Activated B cell treated with CpG ODN at 0.5 μM for 24 hours (primary cell): ENCODE measurements at regions of chr12 and their contacts with region 1.

Region 1: GRCh38 chr12:98503592-98504367 is 11.6 kb upstream of the TMPO start:
- DNase-seq: peak; percentile 88
- ATAC-seq: peak; percentile 88
- H3K4me3 Mint-ChIP-seq: peak overlapping the region; percentile 99
- H3K27ac Mint-ChIP-seq: peak overlapping the region; percentile 99
- H3K4me1 Mint-ChIP-seq: peaks cover 23% of the 10 kb centered on the region
- H3K27me3 Mint-ChIP-seq: peaks cover 5% of the 10 kb centered on the region
- CTCF ChIP-seq: no peak

Region 2: DNA sequence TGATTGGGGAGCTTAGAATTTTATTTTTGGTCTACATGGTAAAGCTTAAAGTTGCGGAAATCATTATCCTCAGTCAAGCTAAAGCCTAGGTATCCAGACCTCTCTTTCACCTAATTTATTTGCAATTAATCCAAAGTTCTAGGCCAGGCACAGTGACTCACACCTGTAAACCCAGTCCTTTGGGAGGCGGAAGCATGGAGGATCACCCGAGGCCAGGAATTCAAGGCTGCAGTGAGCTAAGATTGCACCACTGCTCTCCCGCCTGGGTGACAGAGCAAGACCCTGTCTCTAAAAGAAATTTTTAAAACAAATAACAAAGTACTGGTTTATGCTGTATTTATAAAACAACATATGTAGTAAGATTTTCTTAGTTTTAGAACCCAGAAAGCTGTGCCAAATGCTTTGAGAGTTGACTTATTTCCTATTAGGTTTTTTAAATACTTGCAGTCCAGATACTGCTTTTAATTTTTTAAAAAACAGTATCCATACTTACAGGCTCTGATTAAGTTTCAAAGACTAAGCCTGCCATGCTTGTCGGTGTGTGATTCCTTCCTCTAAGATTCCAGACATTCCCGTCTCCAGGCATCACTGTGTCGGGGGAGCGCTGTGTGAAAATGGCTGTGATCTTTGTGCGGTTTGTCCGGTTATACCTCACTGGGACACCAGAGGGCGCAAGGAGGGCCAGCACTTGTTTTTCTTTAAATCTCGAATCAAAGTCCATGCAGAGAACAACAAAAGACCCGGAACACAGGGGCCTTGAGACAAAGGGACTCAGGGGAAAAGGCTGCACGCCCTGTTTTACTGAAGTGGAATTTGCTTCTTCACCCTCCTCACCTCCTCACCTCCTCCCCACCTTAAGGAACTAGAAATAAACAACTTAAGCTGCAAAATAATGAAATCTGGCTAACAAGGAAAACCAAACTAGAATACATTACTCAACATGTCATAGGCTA is 13.0 kb before region 1 on chr12:
- CTCF ChIA-PET with region 1: interaction called, 6 read pairs
- POLR2A ChIA-PET with region 1: interaction called, 6 read pairs
- intact Hi-C with region 1: loop called (anchors 1 kb)
- DNase-seq: peak; percentile 72
- ATAC-seq: peak; percentile 98
- H3K4me3 Mint-ChIP-seq: peak overlapping the region; percentile 12
- H3K27ac Mint-ChIP-seq: peak overlapping the region; percentile 82
- H3K4me1 Mint-ChIP-seq: peaks cover 4% of the 10 kb centered on the region
- H3K27me3 Mint-ChIP-seq: peaks cover under 1% of the 10 kb centered on the region
- CTCF ChIP-seq: no peak

Region 3: DNA sequence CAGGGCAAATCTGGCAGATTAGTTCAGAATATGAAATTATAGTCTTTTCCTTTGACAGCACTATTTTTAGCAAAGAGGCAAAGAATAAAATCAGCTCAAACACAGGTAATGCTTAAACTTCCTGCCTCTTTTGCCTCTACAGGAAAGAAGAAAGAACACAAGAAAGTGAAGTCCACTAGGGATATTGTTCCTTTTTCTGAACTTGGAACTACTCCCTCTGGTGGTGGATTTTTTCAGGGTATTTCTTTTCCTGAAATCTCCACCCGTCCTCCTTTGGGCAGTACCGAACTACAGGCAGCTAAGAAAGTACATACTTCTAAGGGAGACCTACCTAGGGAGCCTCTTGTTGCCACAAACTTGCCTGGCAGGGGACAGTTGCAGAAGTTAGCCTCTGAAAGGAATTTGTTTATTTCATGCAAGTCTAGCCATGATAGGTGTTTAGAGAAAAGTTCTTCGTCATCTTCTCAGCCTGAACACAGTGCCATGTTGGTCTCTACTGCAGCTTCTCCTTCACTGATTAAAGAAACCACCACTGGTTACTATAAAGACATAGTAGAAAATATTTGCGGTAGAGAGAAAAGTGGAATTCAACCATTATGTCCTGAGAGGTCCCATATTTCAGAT is 29.0 kb after region 1 on chr12:
- CTCF ChIA-PET with region 1: no interaction called
- POLR2A ChIA-PET with region 1: no interaction called
- intact Hi-C with region 1: loop called (anchors 1 kb)
- DNase-seq: no peak
- ATAC-seq: peak; percentile 37
- H3K4me3 Mint-ChIP-seq: no peak overlapping the region
- H3K27ac Mint-ChIP-seq: no peak overlapping the region
- H3K4me1 Mint-ChIP-seq: peaks cover under 1% of the 10 kb centered on the region
- H3K27me3 Mint-ChIP-seq: no peaks in the 10 kb centered on the region
- CTCF ChIP-seq: no peak

Region 4: DNA sequence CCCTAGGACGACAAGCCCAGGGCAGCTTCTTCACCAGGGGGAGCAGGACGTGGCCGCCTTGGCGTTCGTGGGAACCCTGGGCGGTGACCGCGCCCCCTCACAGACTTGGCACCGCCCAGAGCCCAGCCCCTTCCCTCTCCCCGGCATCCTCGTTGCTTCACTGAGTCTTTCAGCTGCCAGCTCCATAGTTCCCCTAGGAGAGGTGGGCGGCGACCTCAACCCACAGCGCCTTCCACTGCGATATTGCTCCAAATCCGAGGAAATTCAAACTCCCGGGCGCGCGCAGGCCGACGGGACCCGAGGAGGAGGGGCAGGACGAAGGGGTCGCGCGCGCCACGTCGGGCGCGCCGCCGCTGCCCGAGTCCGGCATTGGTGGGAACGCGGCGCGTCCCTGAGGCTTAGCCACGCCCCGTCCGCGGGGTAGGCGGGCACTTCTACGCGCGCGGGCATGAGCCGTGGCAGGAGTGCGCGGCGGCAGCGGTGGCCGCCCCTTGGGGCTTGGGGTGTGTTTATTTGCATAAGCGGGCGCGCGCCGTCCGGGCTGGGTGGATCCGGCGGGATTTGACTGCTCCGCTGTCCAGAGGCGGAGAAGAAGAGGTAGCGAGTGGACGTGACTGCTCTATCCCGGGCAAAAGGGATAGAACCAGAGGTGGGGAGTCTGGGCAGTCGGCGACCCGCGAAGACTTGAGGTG is 141.1 kb after region 1 on chr12 and contains the starts of genes APAF1 and IKBIP:
- CTCF ChIA-PET with region 1: no interaction called
- POLR2A ChIA-PET with region 1: interaction called, 5 read pairs
- intact Hi-C with region 1: loop called (anchors 1 kb)
- DNase-seq: peak; percentile 99
- ATAC-seq: peak; percentile 87
- H3K4me3 Mint-ChIP-seq: peak within 1 kb of the TSS; percentile 97
- H3K27ac Mint-ChIP-seq: peak within 1 kb of the TSS; percentile 95
- H3K4me1 Mint-ChIP-seq: peaks cover 19% of the 10 kb centered on the region
- H3K27me3 Mint-ChIP-seq: no peaks in the 10 kb centered on the region
- CTCF ChIP-seq: no peak
- total RNA-seq, gene APAF1: 21.7 and 24.0 TPM in 2 replicates
- total RNA-seq, gene IKBIP: 8.9 and 9.1 TPM in 2 replicates

Region 5: DNA sequence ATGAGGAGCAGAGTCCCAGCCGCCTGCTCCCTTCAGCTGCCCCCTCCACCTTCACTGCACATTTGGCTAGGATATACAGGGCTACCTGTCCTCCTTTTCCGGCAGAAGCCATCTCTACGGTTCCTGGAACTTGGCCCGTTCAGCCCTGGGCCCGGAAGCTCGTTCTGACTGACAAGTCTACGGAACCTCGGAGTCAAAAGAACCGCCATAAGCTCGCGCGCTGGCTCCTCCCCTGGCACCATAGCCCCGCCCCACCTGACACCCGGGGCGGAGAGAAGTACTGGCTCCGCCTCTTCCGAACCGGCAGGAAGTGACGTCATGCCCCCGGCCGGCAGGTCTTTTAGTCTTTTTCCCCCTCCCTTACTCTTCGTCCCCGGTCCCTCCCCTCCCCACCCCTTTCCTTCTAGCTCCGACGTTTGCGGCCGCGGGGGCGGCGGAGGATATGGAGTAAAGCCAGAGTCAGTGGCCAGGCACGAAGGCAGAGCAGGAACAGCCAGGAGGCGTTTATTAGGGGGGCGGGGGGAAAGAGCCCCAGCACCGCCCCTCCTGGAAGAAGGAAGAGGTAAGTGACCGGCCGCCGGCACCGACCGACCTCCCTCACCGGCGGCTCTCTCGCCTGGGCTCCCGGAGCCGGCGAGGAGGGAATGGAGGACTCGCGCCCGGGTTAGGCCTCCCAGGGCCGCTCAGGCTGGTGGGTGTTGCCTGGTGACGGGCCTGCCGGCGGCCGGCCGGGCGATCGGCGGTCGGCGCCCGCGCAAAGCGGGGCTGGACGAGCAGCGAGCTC is 1763.2 kb after region 1 on chr12 and contains the starts of genes DEPDC4 and SCYL2:
- CTCF ChIA-PET with region 1: no interaction called
- POLR2A ChIA-PET with region 1: no interaction called
- intact Hi-C with region 1: loop called (anchors 5 kb)
- DNase-seq: peak; percentile 90
- ATAC-seq: peak; percentile 93
- H3K4me3 Mint-ChIP-seq: peak within 1 kb of the TSS; percentile 99
- H3K27ac Mint-ChIP-seq: peak within 1 kb of the TSS; percentile 95
- H3K4me1 Mint-ChIP-seq: peaks cover 34% of the 10 kb centered on the region
- H3K27me3 Mint-ChIP-seq: no peaks in the 10 kb centered on the region
- CTCF ChIP-seq: no peak
- total RNA-seq, gene DEPDC4: 0.49 and 0.81 TPM in 2 replicates
- total RNA-seq, gene SCYL2: 34.7 and 38.7 TPM in 2 replicates